ENCODE measurements at regions of chr6 and their contacts with region 1.

Region 1: GRCh38 chr6:109455502-109456282 is at the start of gene MICAL1:
- DNase-seq: peak; percentile 45 to 92 (median 70)
- ATAC-seq: peak; percentile 58
- H3K4me3 ChIP-seq: peak within 1 kb of the TSS; percentile 97
- H3K4me3 Mint-ChIP-seq: peak within 1 kb of the TSS; percentile 99
- H3K27ac ChIP-seq: peak within 1 kb of the TSS; percentile 91 to 94
- H3K27ac Mint-ChIP-seq: peak within 1 kb of the TSS; percentile 95
- H3K4me1 ChIP-seq: peaks cover 74% of the 10 kb centered on the region
- H3K4me1 Mint-ChIP-seq: peaks cover 66% of the 10 kb centered on the region
- H3K27me3 ChIP-seq: no peaks in the 10 kb centered on the region
- H3K27me3 Mint-ChIP-seq: no peaks in the 10 kb centered on the region
- CTCF ChIP-seq: no peak
- total RNA-seq, gene MICAL1: 106 to 107 TPM

Region 2: GRCh38 chr6:107964671-107965340 is 1490.9 kb before region 1 on chr6:
- CTCF ChIA-PET with region 1: no interaction called
- POLR2A ChIA-PET with region 1: no interaction called
- intact Hi-C with region 1: no loop called
- DNase-seq: no peak
- ATAC-seq: no peak
- H3K4me3 ChIP-seq: no peak overlapping the region
- H3K4me3 Mint-ChIP-seq: no peak overlapping the region
- H3K27ac ChIP-seq: no peak overlapping the region
- H3K27ac Mint-ChIP-seq: no peak overlapping the region
- H3K4me1 ChIP-seq: no peaks in the 10 kb centered on the region
- H3K4me1 Mint-ChIP-seq: no peaks in the 10 kb centered on the region
- H3K27me3 ChIP-seq: no peaks in the 10 kb centered on the region
- H3K27me3 Mint-ChIP-seq: no peaks in the 10 kb centered on the region
- CTCF ChIP-seq: no peak

Region 3: GRCh38 chr6:109440331-109441068 is 15.2 kb before region 1 on chr6 and contains the starts of genes PPIL6 and SMPD2:
- CTCF ChIA-PET with region 1: interaction called, 42 read pairs
- POLR2A ChIA-PET with region 1: interaction called, 137 read pairs
- intact Hi-C with region 1: loop called (anchors 1 kb)
- DNase-seq: peak; percentile 54 to 92 (median 73)
- ATAC-seq: peak; percentile 75
- H3K4me3 ChIP-seq: peak within 1 kb of the TSS; percentile 81
- H3K4me3 Mint-ChIP-seq: peak within 1 kb of the TSS; percentile 95
- H3K27ac ChIP-seq: peak within 1 kb of the TSS; percentile 74 to 82
- H3K27ac Mint-ChIP-seq: peak within 1 kb of the TSS; percentile 93
- H3K4me1 ChIP-seq: peaks cover 39% of the 10 kb centered on the region
- H3K4me1 Mint-ChIP-seq: peaks cover 27% of the 10 kb centered on the region
- H3K27me3 ChIP-seq: no peaks in the 10 kb centered on the region
- H3K27me3 Mint-ChIP-seq: no peaks in the 10 kb centered on the region
- CTCF ChIP-seq: peak; percentile 4
- total RNA-seq, gene PPIL6: 0.84 to 1.3 TPM
- total RNA-seq, gene SMPD2: 25.7 to 27.3 TPM

Region 4: GRCh38 chr6:109475625-109476024 is 19.9 kb after region 1 on chr6:
- CTCF ChIA-PET with region 1: interaction called, 4 read pairs
- POLR2A ChIA-PET with region 1: interaction called, 86 read pairs
- intact Hi-C with region 1: loop called in 1 of 2 experiments (anchors 1 kb)
- DNase-seq: no peak
- ATAC-seq: no peak
- H3K4me3 ChIP-seq: no peak overlapping the region
- H3K4me3 Mint-ChIP-seq: peak overlapping the region; percentile 35
- H3K27ac ChIP-seq: no peak overlapping the region
- H3K27ac Mint-ChIP-seq: no peak overlapping the region
- H3K4me1 ChIP-seq: peaks cover 48% of the 10 kb centered on the region
- H3K4me1 Mint-ChIP-seq: peaks cover 78% of the 10 kb centered on the region
- H3K27me3 ChIP-seq: no peaks in the 10 kb centered on the region
- H3K27me3 Mint-ChIP-seq: no peaks in the 10 kb centered on the region
- CTCF ChIP-seq: no peak

Region 5: GRCh38 chr6:109491207-109491938 is 35.7 kb after region 1 on chr6:
- CTCF ChIA-PET with region 1: interaction called, 3 read pairs
- POLR2A ChIA-PET with region 1: interaction called, 10 read pairs
- intact Hi-C with region 1: no loop called
- DNase-seq: peak in 4 of 14 experiments; percentile 37 to 68 (median 57)
- ATAC-seq: peak; percentile 98
- H3K4me3 ChIP-seq: no peak overlapping the region
- H3K4me3 Mint-ChIP-seq: peak overlapping the region; percentile 22
- H3K27ac ChIP-seq: peak overlapping the region in 1 of 2 donors; percentile 51
- H3K27ac Mint-ChIP-seq: peak overlapping the region; percentile 38
- H3K4me1 ChIP-seq: peaks cover 24% of the 10 kb centered on the region
- H3K4me1 Mint-ChIP-seq: peaks cover 17% of the 10 kb centered on the region
- H3K27me3 ChIP-seq: no peaks in the 10 kb centered on the region
- H3K27me3 Mint-ChIP-seq: no peaks in the 10 kb centered on the region
- CTCF ChIP-seq: no peak

Measured in CD4-positive, alpha-beta T cell (primary cell).